Activated CD4-positive, alpha-beta T cell treated with anti-CD3 and anti-CD28 coated beads for 36 hours (primary cell): ENCODE measurements at regions of chr16 and their contacts with region 1.

Region 1: DNA sequence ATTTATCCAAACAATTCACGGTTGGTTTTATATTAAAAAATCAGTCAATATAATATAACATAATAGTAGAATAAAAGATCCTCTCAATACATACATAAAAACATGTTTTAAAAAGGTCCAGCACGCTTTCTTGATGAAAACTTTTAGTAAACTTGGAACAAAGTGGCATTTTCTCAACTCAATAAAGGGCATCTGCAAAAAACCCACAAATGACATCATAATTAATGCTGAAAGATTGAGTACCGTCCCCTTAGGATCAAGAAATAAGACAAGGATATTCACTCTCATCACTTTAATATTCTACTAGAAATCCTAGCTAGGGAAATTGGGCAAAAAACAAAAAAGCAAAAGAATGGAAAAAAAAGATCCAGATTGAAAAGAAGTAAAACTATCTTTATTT is 319.2 kb downstream of the WWOX start:
- DNase-seq: no peak
- ATAC-seq: no peak
- H3K4me3 Mint-ChIP-seq: no peak overlapping the region
- H3K27ac Mint-ChIP-seq: no peak overlapping the region
- H3K4me1 Mint-ChIP-seq: no peaks in the 10 kb centered on the region
- H3K27me3 Mint-ChIP-seq: no peaks in the 10 kb centered on the region

Region 2: GRCh38 chr16:78364556-78364880 is 54.1 kb before region 1 on chr16:
- CTCF ChIA-PET with region 1: no interaction called
- POLR2A ChIA-PET with region 1: no interaction called
- intact Hi-C with region 1: no loop called
- DNase-seq: no peak
- ATAC-seq: no peak
- H3K4me3 Mint-ChIP-seq: no peak overlapping the region
- H3K27ac Mint-ChIP-seq: no peak overlapping the region
- H3K4me1 Mint-ChIP-seq: no peaks in the 10 kb centered on the region
- H3K27me3 Mint-ChIP-seq: no peaks in the 10 kb centered on the region

Region 3: DNA sequence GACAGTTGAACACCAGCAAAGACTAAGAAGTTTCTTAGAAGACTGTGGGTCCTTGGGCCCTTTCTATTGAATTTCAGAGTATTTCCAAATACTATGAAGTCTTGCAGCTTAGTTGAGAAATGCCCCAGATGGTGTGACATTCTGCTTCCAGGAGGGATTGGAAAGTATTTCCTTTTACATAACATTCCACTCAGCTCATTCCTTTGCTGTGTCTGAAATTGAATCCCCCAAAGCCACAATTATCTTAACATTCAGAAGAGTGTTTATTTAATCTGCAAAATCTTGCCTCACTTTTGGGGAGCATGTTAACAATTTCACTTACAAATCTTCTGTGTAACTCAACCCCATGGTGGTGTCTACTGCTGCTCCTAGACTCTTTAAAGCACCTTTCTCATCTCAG is 11.4 kb before region 1 on chr16:
- CTCF ChIA-PET with region 1: no interaction called
- POLR2A ChIA-PET with region 1: no interaction called
- intact Hi-C with region 1: loop called in 1 of 2 experiments (anchors 1 kb)
- DNase-seq: no peak
- ATAC-seq: no peak
- H3K4me3 Mint-ChIP-seq: no peak overlapping the region
- H3K27ac Mint-ChIP-seq: no peak overlapping the region
- H3K4me1 Mint-ChIP-seq: no peaks in the 10 kb centered on the region
- H3K27me3 Mint-ChIP-seq: no peaks in the 10 kb centered on the region